ENCODE measurements at regions of chr10 and their contacts with region 1.

Region 1: GRCh38 chr10:84191106-84191505 is 3.2 kb upstream of the CDHR1 start:
- DNase-seq: peak in 31 of 35 experiments; percentile 17 to 69 (median 43)
- ATAC-seq: peak; percentile 63 to 92 (median 74)
- H3K4me3 ChIP-seq: no peak overlapping the region
- H3K4me3 Mint-ChIP-seq: peak overlapping the region in 1 of 3 donors; percentile 19
- H3K27ac ChIP-seq: no peak overlapping the region
- H3K27ac Mint-ChIP-seq: no peak overlapping the region
- H3K4me1 ChIP-seq: peaks cover 12 to 39% of the 10 kb centered on the region in 2 experiments
- H3K4me1 Mint-ChIP-seq: peaks cover 16 to 25% (median 24%) of the 10 kb centered on the region in 3 donors
- H3K27me3 ChIP-seq: peaks cover 3 to 26% of the 10 kb centered on the region in 2 experiments
- H3K27me3 Mint-ChIP-seq: peaks cover 6 to 23% of the 10 kb centered on the region in 2 donors

Region 2: DNA sequence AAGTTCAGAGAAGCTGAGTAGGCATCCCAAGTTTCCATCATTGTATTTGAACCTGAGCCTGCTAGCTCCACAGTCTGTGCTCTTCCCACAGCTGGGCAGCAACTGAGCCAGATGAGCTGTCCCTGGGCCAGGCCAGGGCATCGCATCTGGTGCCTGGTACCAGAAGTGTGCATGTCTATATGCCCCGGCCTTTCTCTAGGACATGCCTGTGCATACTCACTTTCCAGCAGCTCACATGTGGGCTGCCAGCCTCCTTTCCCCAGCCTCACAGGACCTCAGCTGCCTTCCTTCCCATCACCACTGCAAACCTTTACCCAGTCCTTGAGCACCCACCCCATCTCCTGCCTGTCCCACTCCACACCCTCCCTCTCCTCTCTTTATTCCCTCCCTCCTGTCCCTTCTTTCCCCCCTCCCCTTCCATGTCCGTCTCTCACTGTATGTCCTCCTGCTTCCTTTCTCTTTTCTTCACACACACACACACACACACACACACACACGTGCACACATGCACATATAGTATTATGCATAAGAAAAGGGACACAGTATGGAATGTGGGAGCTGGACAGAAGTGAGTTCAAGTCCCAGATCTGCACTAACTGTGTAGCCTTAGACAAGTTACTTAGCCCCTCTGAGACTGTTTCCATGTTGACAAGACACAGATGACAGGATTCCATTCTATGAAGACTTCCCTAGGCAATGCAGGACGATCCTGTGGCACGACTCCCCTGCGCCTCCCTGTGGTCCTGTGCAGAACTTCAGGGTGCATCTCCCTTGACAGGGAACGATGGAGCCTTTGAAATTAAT is 14.1 kb after region 1 on chr10:
- CTCF ChIA-PET with region 1: interaction called in 1 of 2 experiments, 11 read pairs
- POLR2A ChIA-PET with region 1: no interaction called
- DNase-seq: peak; percentile 22 to 81 (median 63)
- ATAC-seq: peak; percentile 64 to 91 (median 70)
- H3K4me3 ChIP-seq: no peak overlapping the region
- H3K4me3 Mint-ChIP-seq: no peak overlapping the region
- H3K27ac ChIP-seq: no peak overlapping the region
- H3K27ac Mint-ChIP-seq: no peak overlapping the region
- H3K4me1 ChIP-seq: no peaks in the 10 kb centered on the region
- H3K4me1 Mint-ChIP-seq: no peaks in the 10 kb centered on the region
- H3K27me3 ChIP-seq: peaks cover 0 to 24% of the 10 kb centered on the region in 2 experiments
- H3K27me3 Mint-ChIP-seq: peaks cover 6 to 26% of the 10 kb centered on the region in 2 donors